Activated CD4-positive, alpha-beta T cell treated with anti-CD3 and anti-CD28 coated beads, Interleukin-2, amount 10 ng/mL, durations not matched to agents 24 days and 14 days (primary cell): ENCODE measurements at regions of chr1 and their contacts with region 1.

Region 1: DNA sequence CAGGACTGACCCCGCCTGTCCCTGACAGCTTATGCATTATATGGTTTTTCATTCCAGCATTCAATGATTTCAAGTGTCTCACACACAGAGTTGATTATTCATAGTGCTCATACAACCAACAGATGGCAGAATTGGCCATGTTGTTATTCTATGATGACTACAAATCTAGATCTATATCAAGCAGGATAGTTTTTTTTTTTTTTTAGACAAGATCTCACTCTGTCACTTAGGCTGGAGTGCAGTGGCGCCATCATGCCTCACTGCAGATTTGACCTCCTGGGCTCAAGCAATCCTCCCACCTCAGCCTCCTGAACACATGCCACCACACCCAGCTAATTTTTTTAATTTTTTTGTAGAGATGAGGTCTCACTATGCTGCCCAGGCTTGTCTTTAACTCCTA is 40.1 kb upstream of the LRRC8D start:
- DNase-seq: peak; percentile 68
- H3K4me3 Mint-ChIP-seq: peak overlapping the region; percentile 64
- H3K27ac Mint-ChIP-seq: peak overlapping the region; percentile 95
- H3K4me1 Mint-ChIP-seq: peaks cover 40% of the 10 kb centered on the region
- H3K27me3 Mint-ChIP-seq: no peaks in the 10 kb centered on the region

Region 2: DNA sequence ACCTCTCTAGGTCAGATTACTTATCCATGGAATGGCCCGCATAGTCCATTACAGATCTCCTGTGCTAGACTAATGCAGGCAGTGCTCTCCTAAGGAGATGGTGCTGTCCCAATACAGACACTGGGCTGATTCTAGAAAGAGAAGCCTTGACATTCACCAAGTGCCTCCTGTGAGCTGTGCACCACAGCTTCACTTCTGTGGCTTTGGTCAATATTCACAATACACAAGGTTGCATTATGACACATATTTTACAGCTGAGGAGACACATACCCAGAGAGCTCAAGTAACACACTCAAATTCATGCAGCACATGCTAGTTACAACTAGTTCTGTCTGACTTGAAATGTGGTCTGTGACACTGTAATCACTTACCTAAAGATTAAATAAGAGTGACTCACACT is 315.5 kb before region 1 on chr1:
- intact Hi-C with region 1: loop called (anchors 5 kb)
- DNase-seq: no peak
- H3K4me3 Mint-ChIP-seq: no peak overlapping the region
- H3K27ac Mint-ChIP-seq: peak overlapping the region; percentile 5
- H3K4me1 Mint-ChIP-seq: peaks cover 29% of the 10 kb centered on the region
- H3K27me3 Mint-ChIP-seq: peaks cover 59% of the 10 kb centered on the region

Region 3: DNA sequence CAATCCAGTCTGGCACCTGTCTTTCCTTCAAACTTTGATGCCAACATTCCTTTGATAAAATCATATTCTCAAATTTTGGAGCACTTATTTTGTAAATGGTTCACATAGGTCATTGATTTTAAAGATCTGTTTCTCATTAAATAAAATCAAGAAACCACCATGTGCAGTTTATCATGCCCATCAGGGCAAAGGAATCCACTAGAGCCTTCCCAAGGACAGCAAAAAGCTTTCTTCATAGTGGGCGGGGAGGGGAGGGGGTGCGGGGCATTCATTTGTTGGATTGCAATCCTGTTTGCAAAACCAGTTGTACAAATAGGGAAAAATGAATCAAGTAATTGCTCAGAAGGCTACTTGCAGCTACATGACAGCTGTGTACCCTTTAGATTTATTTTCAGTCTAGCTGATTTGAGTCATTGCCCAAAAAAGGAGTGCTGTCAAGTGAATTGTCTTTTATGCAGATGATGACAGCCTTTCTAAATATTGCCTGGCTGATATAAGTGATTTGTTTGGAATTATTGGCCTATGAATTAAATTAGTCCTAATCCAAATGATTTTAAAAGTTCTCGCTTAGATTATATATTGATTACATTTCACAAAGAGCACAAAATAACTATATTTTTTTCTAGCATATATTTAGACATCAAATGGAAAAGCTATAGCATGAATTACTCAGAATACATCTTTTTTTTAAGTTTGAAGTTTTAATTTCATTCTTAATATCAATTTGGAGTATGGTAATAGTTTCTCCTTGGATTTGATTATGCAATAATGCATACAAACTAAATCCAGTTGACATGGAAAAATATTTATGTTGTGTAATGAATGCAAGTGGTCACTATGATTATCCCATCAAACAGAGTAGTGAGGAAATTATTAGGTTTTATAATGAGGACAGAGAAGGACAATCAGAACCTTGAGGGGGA is 232.9 kb before region 1 on chr1:
- intact Hi-C with region 1: loop called (anchors 2 kb)
- DNase-seq: peak; percentile 43
- H3K4me3 Mint-ChIP-seq: peak overlapping the region; percentile 28
- H3K27ac Mint-ChIP-seq: peak overlapping the region; percentile 92
- H3K4me1 Mint-ChIP-seq: peaks cover 78% of the 10 kb centered on the region
- H3K27me3 Mint-ChIP-seq: peaks cover 2% of the 10 kb centered on the region

Region 4: DNA sequence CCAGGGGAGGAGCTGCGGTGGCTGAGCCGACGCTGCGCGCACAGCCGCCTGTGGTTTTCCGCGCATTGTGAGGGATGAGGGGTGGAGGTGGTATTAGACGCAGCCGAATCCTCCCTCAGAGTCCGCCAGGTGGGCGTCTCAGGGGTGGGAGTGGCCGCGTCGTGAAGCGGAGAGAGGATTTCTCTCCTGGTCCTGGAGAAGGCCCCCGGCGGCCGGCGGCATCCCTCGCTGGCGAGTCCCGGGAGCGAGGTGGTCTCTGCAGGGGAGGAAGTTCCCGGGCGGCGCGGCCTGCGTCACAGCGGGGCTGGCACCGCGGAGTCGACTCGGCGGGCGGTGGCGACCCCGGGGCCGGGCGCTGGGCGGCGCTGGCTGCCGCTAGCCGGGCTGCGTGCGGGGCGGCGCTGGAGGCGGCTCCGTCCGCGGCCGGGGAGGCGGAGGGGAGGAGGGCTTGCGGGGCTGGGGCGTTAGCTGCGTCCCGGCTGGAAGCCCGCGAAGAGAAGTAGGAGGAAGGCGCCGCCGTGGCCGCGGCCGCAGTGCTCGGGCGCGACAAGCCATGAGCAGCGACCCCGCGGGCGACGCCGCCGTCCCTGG is 148.0 kb before region 1 on chr1 and contains the start of gene LRRC8C:
- intact Hi-C with region 1: loop called (anchors 1 kb)
- DNase-seq: peak; percentile 97
- H3K4me3 Mint-ChIP-seq: peak within 1 kb of the TSS; percentile 96
- H3K27ac Mint-ChIP-seq: peak within 1 kb of the TSS; percentile 95
- H3K4me1 Mint-ChIP-seq: peaks cover 61% of the 10 kb centered on the region
- H3K27me3 Mint-ChIP-seq: no peaks in the 10 kb centered on the region
- total RNA-seq, gene LRRC8C: 73.1 and 74.0 TPM in 2 replicates

Region 5: GRCh38 chr1:89762779-89763648 is 17.7 kb before region 1 on chr1:
- intact Hi-C with region 1: loop called (anchors 1 kb)
- DNase-seq: peak; percentile 96
- H3K4me3 Mint-ChIP-seq: peak overlapping the region; percentile 91
- H3K27ac Mint-ChIP-seq: peak overlapping the region; percentile 96
- H3K4me1 Mint-ChIP-seq: peaks cover 53% of the 10 kb centered on the region
- H3K27me3 Mint-ChIP-seq: no peaks in the 10 kb centered on the region

Region 6: GRCh38 chr1:89843281-89844121 is 62.8 kb after region 1 on chr1:
- intact Hi-C with region 1: loop called (anchors 2 kb)
- DNase-seq: peak; percentile 93
- H3K4me3 Mint-ChIP-seq: peak overlapping the region; percentile 97
- H3K27ac Mint-ChIP-seq: peak overlapping the region; percentile 98
- H3K4me1 Mint-ChIP-seq: peaks cover 51% of the 10 kb centered on the region
- H3K27me3 Mint-ChIP-seq: no peaks in the 10 kb centered on the region

Region 7: DNA sequence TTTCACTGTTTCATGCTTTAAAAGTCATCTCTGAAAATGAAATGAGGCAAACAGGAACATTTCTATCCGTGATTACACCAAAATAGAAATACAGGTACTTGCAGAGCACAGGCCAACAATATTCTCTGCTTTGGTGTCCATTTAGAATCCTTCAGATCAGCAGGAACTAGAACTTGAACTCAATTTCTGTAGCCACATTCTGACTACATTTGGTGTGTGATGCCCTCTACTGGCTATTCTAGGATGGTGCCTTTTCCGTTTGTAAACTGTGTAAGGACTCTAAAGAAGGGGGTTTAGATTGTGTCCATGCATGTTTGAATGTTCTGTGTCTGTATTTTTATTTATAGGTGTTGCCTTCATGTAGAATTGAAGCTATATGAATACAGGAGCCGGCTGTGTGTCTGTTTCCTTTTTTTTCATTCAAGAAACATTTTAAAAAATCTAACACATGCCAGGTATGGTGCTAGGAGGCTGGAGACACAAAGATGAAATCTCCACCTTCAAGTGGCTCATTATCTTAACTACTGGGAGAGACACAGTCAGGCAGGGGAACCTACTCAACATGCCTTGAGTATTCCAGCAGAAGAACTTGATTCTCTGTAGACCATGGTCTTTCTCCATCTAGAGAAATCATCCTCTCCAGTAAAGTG is 206.6 kb after region 1 on chr1:
- intact Hi-C with region 1: loop called (anchors 1 kb)
- DNase-seq: peak; percentile 90
- H3K4me3 Mint-ChIP-seq: no peak overlapping the region
- H3K27ac Mint-ChIP-seq: no peak overlapping the region
- H3K4me1 Mint-ChIP-seq: peaks cover 12% of the 10 kb centered on the region
- H3K27me3 Mint-ChIP-seq: peaks cover 11% of the 10 kb centered on the region

Region 8: DNA sequence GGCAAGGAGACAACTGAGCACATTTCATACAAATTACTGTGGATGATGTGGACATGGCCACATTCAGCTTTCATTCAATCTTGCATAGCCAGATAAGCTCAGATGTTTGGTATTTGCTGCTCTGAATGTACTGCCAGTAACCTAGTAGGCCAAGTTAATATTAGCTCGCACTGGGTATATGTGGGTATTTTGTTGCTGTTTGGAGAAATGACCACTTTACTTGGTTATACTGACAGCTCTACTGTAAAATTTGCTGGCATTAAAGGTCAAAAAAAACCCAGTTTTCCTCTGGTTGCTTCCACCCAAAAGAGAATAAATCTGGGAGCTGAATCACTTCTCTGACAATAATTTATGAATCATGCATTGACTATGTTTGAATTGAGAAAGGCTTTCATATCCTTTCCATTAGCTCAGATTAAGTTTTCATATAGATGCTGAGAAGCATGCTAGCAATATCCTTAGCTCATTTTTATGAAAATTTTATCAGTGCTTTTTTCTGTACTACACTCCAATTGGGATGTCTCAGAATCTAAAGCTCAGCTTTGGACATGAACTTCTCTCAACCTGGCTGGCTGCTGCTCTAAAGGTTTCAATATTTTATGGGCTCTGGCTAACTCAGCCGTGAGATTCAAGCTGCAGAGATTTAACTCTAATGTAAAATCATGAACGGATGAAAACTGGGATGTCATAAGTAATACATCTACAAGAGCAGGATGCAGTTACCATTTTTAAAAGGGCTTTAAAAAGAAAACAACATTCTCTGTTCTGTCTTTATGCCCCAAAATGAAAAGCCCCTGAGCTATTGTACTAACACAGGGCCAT is 606.4 kb after region 1 on chr1:
- intact Hi-C with region 1: no loop called
- DNase-seq: peak; percentile 9
- H3K4me3 Mint-ChIP-seq: no peak overlapping the region
- H3K27ac Mint-ChIP-seq: no peak overlapping the region
- H3K4me1 Mint-ChIP-seq: no peaks in the 10 kb centered on the region
- H3K27me3 Mint-ChIP-seq: no peaks in the 10 kb centered on the region